ENCODE measurements at regions of chr14 and their contacts with region 1.

Region 1: DNA sequence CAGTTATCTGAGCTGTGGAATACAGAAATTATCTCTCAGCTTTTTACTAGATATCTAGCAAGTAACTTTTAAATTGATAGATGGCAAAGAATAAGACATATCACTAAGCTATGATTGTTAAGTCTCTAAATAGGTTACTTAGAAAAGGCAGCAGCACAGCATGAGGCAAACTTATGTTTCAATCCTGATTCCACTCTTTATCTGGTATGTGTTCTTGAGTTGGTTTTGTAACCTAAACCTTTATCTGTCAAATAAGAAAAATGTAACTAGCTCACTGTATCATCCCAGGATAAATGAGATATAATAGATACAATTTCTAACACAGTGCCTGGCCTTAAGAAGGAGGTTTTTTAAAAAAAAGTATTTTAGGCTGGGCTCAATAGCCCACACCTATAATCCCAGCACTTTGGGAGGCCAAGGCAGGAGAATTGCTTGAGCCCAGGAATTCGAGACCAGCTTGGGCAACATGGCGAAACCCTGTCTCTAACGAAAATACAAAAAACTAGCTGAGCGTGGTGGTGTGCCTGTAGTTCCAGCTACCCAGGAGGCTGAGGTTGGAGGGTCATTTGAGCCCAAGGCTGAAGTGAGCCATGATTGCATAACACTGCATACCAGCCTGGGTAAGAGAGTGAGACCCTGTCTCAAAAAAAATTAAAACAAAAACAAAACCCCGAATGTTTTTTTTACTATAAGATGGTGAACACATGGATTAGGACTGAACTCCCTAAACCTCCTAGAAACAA is 56.8 kb downstream of the HEATR5A start:
- DNase-seq: no peak
- ATAC-seq: no peak

Region 2: GRCh38 chr14:31172084-31172483 is 191.4 kb before region 1 on chr14:
- intact Hi-C with region 1: no loop called
- DNase-seq: no peak
- ATAC-seq: no peak

Region 3: GRCh38 chr14:31441271-31442110 is 78.0 kb after region 1 on chr14:
- intact Hi-C with region 1: loop called (anchors 2 kb)
- DNase-seq: no peak
- ATAC-seq: peak; percentile 55

Region 4: GRCh38 chr14:31476131-31476866 is 112.8 kb after region 1 on chr14:
- intact Hi-C with region 1: no loop called
- DNase-seq: no peak
- ATAC-seq: no peak